ENCODE measurements at regions of chr10 and their contacts with region 1.

Region 1: GRCh38 chr10:118568327-118568848 is 27.1 kb downstream of the PRLHR start:
- DNase-seq: peak; percentile 33 to 59 (median 49)
- H3K4me3 ChIP-seq: no peak overlapping the region
- H3K4me3 Mint-ChIP-seq: peak overlapping the region in 1 of 2 donors; percentile 39
- H3K27ac ChIP-seq: no peak overlapping the region
- H3K27ac Mint-ChIP-seq: peak overlapping the region in 1 of 7 donors; percentile 15
- H3K4me1 ChIP-seq: peaks cover 10 to 13% of the 10 kb centered on the region in 2 donors
- H3K4me1 Mint-ChIP-seq: peaks cover 10% of the 10 kb centered on the region
- H3K27me3 ChIP-seq: no peaks in the 10 kb centered on the region
- H3K27me3 Mint-ChIP-seq: peaks cover 1 to 12% (median 7%) of the 10 kb centered on the region in 3 donors
- CTCF ChIP-seq: peak; percentile 76

Region 2: GRCh38 chr10:118501637-118502440 is 66.5 kb before region 1 on chr10:
- intact Hi-C with region 1: no loop called
- DNase-seq: peak; percentile 53 to 80 (median 70)
- H3K4me3 ChIP-seq: peak overlapping the region in 1 of 3 experiments; percentile 0
- H3K4me3 Mint-ChIP-seq: no peak overlapping the region
- H3K27ac ChIP-seq: peak overlapping the region in 1 of 2 donors; percentile 57
- H3K27ac Mint-ChIP-seq: peak overlapping the region in 6 of 7 donors; percentile 65 to 85 (median 74)
- H3K4me1 ChIP-seq: peaks cover 40 to 48% of the 10 kb centered on the region in 2 donors
- H3K4me1 Mint-ChIP-seq: peaks cover 33% of the 10 kb centered on the region
- H3K27me3 ChIP-seq: peaks cover 0 to 3% of the 10 kb centered on the region in 2 donors
- H3K27me3 Mint-ChIP-seq: peaks cover 6 to 12% (median 11%) of the 10 kb centered on the region in 3 donors
- CTCF ChIP-seq: no peak

Region 3: DNA sequence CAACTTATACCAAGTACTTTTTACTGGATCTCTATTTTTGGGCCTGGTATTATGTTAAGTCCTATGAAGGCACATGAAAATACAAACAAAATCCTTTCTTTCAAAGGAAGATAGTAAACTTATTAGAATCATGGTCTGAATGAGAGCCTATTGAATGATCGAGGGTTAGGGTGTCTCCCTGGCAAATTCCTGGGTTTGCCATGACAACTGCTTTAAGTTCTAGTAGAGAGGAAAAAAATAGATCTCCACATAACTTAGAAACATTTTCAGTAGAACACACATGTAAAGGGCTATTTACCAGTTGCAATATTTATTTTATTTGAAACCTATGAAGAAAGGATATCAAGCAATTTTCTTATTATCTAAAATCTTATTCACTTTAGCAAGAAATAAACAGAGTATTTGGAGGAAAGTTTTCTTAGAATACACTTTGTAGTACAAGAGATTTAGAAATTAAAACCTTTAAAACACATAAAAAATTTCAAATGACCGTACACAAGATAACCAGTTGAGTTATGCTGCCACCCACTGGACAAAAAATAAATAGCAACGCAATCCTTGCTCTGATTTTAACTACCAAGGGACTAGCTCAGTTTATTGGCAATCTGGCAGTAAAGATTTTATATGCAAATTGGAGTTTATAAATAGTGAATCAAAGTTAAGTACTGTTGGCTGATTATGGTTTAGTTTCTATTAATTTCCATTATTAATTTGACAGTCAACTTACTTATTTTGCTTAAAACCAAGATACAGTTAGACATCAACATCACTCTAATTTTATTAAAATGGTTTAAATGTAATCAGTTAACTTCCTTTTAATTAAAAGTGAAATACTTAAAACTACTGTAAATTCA is 152.5 kb after region 1 on chr10:
- intact Hi-C with region 1: loop called (anchors 10 kb)
- DNase-seq: peak; percentile 47 to 71 (median 47)
- H3K4me3 ChIP-seq: no peak overlapping the region
- H3K4me3 Mint-ChIP-seq: no peak overlapping the region
- H3K27ac ChIP-seq: no peak overlapping the region
- H3K27ac Mint-ChIP-seq: no peak overlapping the region
- H3K4me1 ChIP-seq: no peaks in the 10 kb centered on the region
- H3K4me1 Mint-ChIP-seq: no peaks in the 10 kb centered on the region
- H3K27me3 ChIP-seq: no peaks in the 10 kb centered on the region
- H3K27me3 Mint-ChIP-seq: no peaks in the 10 kb centered on the region
- CTCF ChIP-seq: peak; percentile 95

Region 4: GRCh38 chr10:118800920-118801319 is 232.5 kb after region 1 on chr10:
- intact Hi-C with region 1: loop called (anchors 2 kb)
- DNase-seq: peak; percentile 27 to 45 (median 31)
- H3K4me3 ChIP-seq: no peak overlapping the region
- H3K4me3 Mint-ChIP-seq: no peak overlapping the region
- H3K27ac ChIP-seq: no peak overlapping the region
- H3K27ac Mint-ChIP-seq: no peak overlapping the region
- H3K4me1 ChIP-seq: no peaks in the 10 kb centered on the region
- H3K4me1 Mint-ChIP-seq: peaks cover 2% of the 10 kb centered on the region
- H3K27me3 ChIP-seq: peaks cover 4 to 9% of the 10 kb centered on the region in 2 donors
- H3K27me3 Mint-ChIP-seq: peaks cover 17 to 32% (median 18%) of the 10 kb centered on the region in 3 donors
- CTCF ChIP-seq: peak; percentile 58